IMR-90 (cell line): ENCODE measurements at regions of chr9 and their contacts with region 1.

Region 1: DNA sequence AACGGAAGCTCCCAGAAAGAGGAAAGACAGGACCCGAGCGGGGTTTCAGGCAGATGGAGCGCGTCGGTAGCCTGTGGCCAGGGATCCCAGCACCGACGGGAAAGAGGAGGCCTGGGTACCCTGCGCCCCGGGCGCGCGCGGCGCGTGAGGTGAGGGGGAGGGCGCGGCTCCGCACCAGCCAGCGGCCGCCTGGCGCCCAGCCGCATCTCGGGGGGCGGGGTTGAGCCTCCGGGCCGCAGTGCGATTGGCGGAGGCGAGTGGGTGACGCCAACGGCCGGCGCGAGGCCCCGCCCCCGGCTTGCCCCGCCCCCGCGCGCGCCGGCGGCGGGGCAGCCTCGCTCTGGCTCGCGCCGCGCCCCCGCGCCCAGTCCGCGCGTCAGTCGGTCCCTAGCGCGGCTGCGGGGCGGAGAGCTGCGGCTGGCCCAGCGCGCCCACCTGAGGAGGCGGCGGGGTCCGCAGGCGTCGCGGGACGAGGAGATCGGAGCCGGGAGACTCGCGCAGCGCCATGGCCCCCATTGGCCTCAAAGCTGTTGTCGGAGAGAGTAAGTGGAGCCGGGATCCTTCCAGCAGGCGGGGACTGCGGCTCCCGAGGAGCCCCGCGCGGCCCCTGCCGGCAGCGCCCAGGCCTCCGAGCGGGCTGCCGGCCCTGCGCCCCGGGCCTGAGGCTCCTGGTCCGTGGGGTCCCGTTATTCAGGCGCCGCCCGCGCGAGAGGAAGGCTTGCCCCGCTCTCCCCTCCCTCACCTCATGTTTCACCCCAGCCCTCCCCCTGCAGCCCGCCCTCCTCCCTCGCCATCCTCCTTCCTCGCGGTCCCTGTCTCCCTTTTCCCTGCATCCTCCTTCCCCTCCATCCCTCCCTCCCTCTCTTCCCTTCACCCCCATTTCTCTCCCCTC is at the start of gene STXBP1:
- DNase-seq: peak; percentile 76
- ATAC-seq: peak; percentile 86
- H3K4me3 ChIP-seq: peak within 1 kb of the TSS; percentile 97
- H3K27ac ChIP-seq: peak within 1 kb of the TSS; percentile 76
- H3K4me1 ChIP-seq: peaks cover 8% of the 10 kb centered on the region
- H3K27me3 ChIP-seq: no peaks in the 10 kb centered on the region
- CTCF ChIP-seq: peak; percentile 32; the same call in 1 of the 2 replicates
- POLR2A ChIP-seq: peak; percentile 76
- RAD21 ChIP-seq: no peak
- total RNA-seq, gene STXBP1: 15.8 and 18.9 TPM in 2 replicates

Region 2: DNA sequence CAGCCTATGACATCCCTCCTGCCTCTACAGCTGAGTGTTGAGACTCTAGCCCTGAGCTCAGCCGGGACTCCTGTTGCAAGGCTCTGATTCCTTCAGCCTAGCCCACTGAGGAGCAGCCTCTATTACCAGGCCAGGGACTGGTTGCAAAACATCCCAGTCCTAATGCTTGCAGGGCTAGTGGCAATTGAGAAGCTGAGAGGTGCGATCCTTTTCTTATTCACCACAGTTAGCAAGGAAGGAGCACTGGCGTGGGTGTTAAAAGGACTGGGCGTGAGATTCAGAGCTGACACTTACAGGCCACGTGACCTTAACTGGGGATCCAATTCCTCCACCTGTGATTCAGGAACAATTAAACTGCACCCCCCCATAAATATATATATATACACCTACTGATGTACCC is 288.8 kb before region 1 on chr9:
- CTCF ChIA-PET with region 1: no interaction called
- POLR2A ChIA-PET with region 1: no interaction called
- dilution Hi-C with region 1: no loop called
- in situ Hi-C with region 1: no loop called
- intact Hi-C with region 1: no loop called
- DNase-seq: no peak
- ATAC-seq: no peak
- H3K4me3 ChIP-seq: no peak overlapping the region
- H3K27ac ChIP-seq: no peak overlapping the region
- H3K4me1 ChIP-seq: no peaks in the 10 kb centered on the region; the same call in 1 of the 2 replicates
- H3K27me3 ChIP-seq: no peaks in the 10 kb centered on the region
- CTCF ChIP-seq: no peak
- POLR2A ChIP-seq: no peak
- RAD21 ChIP-seq: no peak

Region 3: DNA sequence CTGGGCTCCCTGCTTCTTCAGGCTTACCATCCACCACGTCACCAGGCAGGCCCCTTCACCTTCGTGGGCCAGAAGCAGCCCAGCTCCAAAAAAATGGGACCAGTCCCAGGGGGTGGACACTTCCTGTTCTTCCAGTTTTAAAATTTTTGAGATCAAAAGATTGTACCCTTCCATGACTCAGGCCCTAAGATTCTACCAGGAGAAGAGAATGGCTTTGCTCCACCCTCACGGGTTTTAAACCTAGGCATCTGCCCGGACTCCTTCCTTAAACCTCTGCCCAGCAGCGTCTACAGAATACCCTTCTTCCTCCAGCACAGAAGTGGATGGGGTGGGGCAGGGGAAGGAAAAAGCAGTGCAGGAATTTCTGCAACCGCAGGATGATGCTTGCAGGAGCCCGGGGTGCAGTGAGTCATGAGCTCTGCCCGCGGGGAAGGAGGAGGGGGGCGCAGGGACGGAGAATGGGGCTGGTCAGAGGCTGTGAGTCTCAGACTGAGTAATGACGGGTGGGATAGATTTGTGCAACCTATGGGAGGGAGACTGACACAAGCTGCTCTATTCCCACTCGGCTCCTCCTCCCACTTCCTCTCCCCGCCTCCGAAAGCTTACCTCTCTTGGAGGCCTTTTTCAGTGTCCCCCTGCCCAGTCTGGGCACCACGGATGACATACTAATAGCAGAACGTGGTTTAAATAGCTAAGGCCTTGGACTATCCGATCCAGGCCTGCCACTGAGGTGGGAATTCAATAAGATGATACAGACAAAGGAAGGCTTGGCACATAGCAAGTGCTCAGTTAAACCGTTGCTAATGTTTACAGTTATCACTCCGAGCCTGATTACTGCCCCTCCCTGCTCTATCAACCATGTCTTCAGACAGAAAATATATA is 50.3 kb before region 1 on chr9:
- CTCF ChIA-PET with region 1: no interaction called
- POLR2A ChIA-PET with region 1: no interaction called
- dilution Hi-C with region 1: no loop called
- in situ Hi-C with region 1: no loop called
- intact Hi-C with region 1: no loop called
- DNase-seq: peak; percentile 99
- ATAC-seq: peak; percentile 83
- H3K4me3 ChIP-seq: no peak overlapping the region
- H3K27ac ChIP-seq: peak overlapping the region; percentile 89
- H3K4me1 ChIP-seq: peaks cover 64% of the 10 kb centered on the region
- H3K27me3 ChIP-seq: no peaks in the 10 kb centered on the region
- CTCF ChIP-seq: no peak
- POLR2A ChIP-seq: peak; percentile 44; the same call in 1 of the 2 replicates
- RAD21 ChIP-seq: peak; percentile 22

Region 4: DNA sequence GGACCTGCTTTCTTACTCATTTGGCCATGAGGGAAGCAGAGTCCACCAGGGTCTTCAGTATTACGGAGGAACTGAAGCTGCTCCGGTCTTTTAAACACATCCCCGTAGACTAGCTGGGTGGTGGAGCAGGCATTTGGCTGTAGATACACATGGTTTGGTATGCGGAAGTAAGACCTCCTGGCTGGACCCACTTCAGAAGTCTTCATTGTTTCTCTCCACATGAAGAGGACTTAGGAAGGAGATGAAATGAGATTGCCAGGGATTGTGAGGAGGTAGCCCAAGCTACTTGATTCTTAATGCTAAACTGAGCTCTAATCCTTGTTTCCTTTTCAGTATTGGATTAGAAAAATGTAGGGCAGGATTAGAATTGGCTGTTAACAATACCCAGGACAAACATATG is 32.8 kb after region 1 on chr9:
- CTCF ChIA-PET with region 1: no interaction called
- POLR2A ChIA-PET with region 1: no interaction called
- dilution Hi-C with region 1: no loop called
- in situ Hi-C with region 1: no loop called
- intact Hi-C with region 1: loop called (anchors 5 kb)
- DNase-seq: no peak
- ATAC-seq: no peak
- H3K4me3 ChIP-seq: no peak overlapping the region
- H3K27ac ChIP-seq: no peak overlapping the region
- H3K4me1 ChIP-seq: no peaks in the 10 kb centered on the region
- H3K27me3 ChIP-seq: no peaks in the 10 kb centered on the region
- CTCF ChIP-seq: no peak
- POLR2A ChIP-seq: no peak
- RAD21 ChIP-seq: no peak

Region 5: GRCh38 chr9:127664667-127665507 is 52.7 kb after region 1 on chr9:
- CTCF ChIA-PET with region 1: no interaction called
- POLR2A ChIA-PET with region 1: no interaction called
- dilution Hi-C with region 1: no loop called
- in situ Hi-C with region 1: no loop called
- intact Hi-C with region 1: loop called (anchors 5 kb)
- DNase-seq: peak; percentile 13
- ATAC-seq: 0 out of 2 replicates have a peak, but pooled peaks have one; percentile 13
- H3K4me3 ChIP-seq: no peak overlapping the region
- H3K27ac ChIP-seq: no peak overlapping the region
- H3K4me1 ChIP-seq: peaks cover 7% of the 10 kb centered on the region; the same call in 1 of the 2 replicates
- H3K27me3 ChIP-seq: no peaks in the 10 kb centered on the region
- CTCF ChIP-seq: no peak
- POLR2A ChIP-seq: no peak
- RAD21 ChIP-seq: no peak

Region 6: GRCh38 chr9:127698985-127699670 is 87.0 kb after region 1 on chr9:
- CTCF ChIA-PET with region 1: no interaction called
- POLR2A ChIA-PET with region 1: no interaction called
- dilution Hi-C with region 1: no loop called
- in situ Hi-C with region 1: no loop called
- intact Hi-C with region 1: no loop called
- DNase-seq: peak; percentile 92
- ATAC-seq: peak; percentile 98
- H3K4me3 ChIP-seq: peak overlapping the region; percentile 27; the same call in 1 of the 2 replicates
- H3K27ac ChIP-seq: 0 out of 2 replicates have a peak overlapping the region, but pooled peaks have one; percentile 12
- H3K4me1 ChIP-seq: no peaks in the 10 kb centered on the region
- H3K27me3 ChIP-seq: no peaks in the 10 kb centered on the region; the same call in 1 of the 2 replicates
- CTCF ChIP-seq: no peak
- POLR2A ChIP-seq: no peak
- RAD21 ChIP-seq: no peak

Region 7: DNA sequence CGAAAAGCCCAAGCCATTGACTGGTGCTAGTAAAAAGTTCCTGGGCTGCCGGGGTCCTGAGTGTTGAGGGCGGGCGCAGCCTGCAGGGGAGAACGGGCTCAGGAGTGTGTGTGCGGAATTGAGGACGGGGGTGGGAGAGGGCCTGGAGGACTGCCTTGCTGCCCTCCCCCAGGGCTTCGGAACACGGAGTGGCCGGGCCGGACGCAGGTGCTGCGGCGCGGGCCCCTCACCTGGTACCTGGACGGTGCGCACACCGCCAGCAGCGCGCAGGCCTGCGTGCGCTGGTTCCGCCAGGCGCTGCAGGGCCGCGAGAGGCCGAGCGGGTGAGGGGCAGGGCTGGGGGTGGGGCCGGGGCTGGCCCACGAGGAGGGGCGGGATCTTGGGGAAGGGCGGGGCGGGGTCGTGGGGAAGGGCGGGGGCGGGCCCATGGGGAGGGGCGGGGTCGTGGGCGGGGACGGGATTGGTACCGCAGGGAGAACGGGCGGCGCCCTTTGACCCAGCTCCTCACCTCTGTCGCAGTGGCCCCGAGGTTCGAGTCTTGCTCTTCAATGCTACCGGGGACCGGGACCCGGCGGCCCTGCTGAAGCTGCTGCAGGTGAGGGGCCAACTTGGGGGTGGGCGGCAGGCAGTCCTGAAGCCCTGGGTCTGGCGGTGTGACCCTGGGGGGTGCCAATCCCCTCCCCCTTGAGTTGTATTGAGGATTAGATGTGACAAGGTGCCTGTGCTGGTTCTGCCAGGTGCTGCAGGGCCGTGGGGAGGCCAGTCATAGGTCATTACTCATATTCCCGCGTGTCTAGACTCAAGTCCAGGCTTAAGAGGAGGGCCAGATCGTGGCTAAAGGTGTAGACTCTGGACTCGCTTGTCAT is 197.6 kb after region 1 on chr9:
- CTCF ChIA-PET with region 1: no interaction called
- POLR2A ChIA-PET with region 1: no interaction called
- dilution Hi-C with region 1: no loop called
- in situ Hi-C with region 1: no loop called
- intact Hi-C with region 1: no loop called
- DNase-seq: no peak
- ATAC-seq: peak; percentile 37
- H3K4me3 ChIP-seq: no peak overlapping the region
- H3K27ac ChIP-seq: no peak overlapping the region
- H3K4me1 ChIP-seq: no peaks in the 10 kb centered on the region
- H3K27me3 ChIP-seq: no peaks in the 10 kb centered on the region
- CTCF ChIP-seq: no peak
- POLR2A ChIP-seq: no peak
- RAD21 ChIP-seq: no peak